ENCODE measurements at regions of chr16 and their contacts with region 1.

Region 1: GRCh38 chr16:25224731-25225319 is 8.1 kb downstream of the AQP8 start:
- DNase-seq: no peak
- ATAC-seq: no peak; the same call in 2 of the 3 replicates
- H3K4me3 ChIP-seq: no peak overlapping the region
- H3K27ac ChIP-seq: no peak overlapping the region
- H3K4me1 ChIP-seq: no peaks in the 10 kb centered on the region
- H3K27me3 ChIP-seq: no peaks in the 10 kb centered on the region
- CTCF ChIP-seq: no peak
- EP300 ChIP-seq: no peak
- POLR2A ChIP-seq: no peak
- RAD21 ChIP-seq: no peak

Region 2: DNA sequence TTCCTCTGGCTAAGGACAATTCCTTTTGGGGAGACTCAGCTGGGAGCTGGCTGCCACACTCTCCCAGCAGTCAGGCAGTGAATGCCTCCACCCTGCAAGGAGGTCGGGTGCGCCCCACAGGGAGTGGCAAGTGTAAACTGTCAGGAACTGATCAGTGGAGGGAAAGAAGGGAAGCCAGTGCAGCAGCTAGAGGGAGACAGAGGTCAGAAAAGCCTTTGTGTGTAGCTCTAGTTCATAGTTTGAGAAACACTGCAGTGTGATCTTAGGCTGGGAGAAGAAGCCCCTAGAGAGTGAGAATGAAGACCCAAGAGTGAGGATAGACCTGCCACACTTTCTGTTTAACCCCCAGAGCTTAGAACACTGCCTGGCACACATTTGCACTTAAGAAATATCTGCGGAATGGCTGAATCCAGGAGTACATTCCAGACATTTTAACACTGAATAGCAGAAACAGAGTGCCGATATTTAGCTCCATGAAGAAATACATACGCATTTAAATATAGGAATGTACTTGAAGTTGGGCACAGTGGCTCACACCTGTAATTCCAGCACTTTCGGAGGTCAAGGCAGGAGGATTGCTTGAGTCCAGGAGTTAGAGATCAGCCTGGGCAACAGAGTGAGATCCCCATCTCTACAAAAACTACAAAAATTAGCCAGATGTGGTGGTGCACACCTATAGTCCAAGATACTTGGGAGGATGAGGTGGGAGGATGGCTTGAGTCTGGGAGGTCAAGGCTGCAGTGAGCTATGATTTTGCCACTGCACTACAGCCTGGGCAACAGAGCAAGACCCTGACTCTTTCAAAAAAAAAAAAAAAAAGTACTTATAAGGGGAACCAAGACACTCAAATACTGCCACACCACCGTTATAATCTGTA is 390.1 kb before region 1 on chr16:
- CTCF ChIA-PET with region 1: interaction called, 16 read pairs
- POLR2A ChIA-PET with region 1: no interaction called
- RAD21 ChIA-PET with region 1: interaction called, 16 read pairs
- SMC1A ChIA-PET with region 1: interaction called, 6 read pairs
- in situ Hi-C with region 1: no loop called
- intact Hi-C with region 1: loop called (anchors 10 kb)
- DNase-seq: no peak
- ATAC-seq: peak; percentile 85
- H3K4me3 ChIP-seq: no peak overlapping the region
- H3K27ac ChIP-seq: no peak overlapping the region
- H3K4me1 ChIP-seq: no peaks in the 10 kb centered on the region
- H3K27me3 ChIP-seq: no peaks in the 10 kb centered on the region
- CTCF ChIP-seq: peak; percentile 56 to 69 (median 62); a peak in 5 of 6 replicates
- EP300 ChIP-seq: no peak
- POLR2A ChIP-seq: no peak
- RAD21 ChIP-seq: peak; percentile 57

Region 3: DNA sequence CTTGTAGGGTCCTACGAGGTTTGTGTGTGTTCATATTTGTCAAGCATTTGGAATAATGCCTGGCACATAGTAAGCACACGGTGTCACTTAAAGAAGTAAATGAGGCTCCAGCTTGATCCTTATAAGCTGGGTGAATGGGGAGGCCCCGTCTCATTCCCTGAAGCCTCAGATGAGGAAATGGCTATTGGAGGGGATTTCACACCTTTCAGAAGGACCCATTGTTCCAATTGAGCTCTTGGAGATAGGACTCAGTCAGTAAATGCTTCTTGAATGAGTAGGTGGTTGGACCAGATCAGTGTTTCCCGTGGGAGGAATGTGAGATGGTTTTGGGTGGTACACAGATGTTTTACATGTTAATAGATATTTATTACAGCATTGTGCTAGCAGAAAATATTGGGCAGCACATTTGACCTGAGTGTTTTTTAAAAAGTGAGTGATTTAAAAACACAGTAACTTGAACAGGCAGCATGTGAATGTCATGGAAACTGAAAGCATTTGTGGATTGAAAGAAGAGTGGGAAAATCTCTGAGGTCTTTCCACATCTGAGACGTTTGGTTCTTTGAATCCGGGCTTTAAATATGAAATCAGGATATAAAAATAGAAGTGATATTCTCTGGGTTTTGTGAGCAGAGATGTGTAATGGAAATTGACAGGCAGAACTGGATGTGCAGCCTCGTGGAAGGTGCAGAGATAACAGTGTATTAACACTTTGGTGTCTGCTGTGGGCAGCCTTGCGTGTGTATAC is 173.2 kb before region 1 on chr16:
- CTCF ChIA-PET with region 1: interaction called, 42 read pairs
- POLR2A ChIA-PET with region 1: no interaction called
- RAD21 ChIA-PET with region 1: interaction called, 10 read pairs
- SMC1A ChIA-PET with region 1: interaction called, 20 read pairs
- in situ Hi-C with region 1: no loop called
- intact Hi-C with region 1: loop called (anchors 1 kb)
- DNase-seq: no peak
- ATAC-seq: peak; percentile 13
- H3K4me3 ChIP-seq: peak overlapping the region; percentile 59; the same call in 1 of the 2 replicates
- H3K27ac ChIP-seq: peak overlapping the region; percentile 2
- H3K4me1 ChIP-seq: peaks cover 33% of the 10 kb centered on the region
- H3K27me3 ChIP-seq: no peaks in the 10 kb centered on the region
- CTCF ChIP-seq: no peak
- EP300 ChIP-seq: no peak; a peak in 1 of 4 replicates
- POLR2A ChIP-seq: no peak
- RAD21 ChIP-seq: 0 out of 2 replicates have a peak, but pooled peaks have one; percentile 1

Region 4: GRCh38 chr16:25066747-25067631 is 157.8 kb before region 1 on chr16:
- CTCF ChIA-PET with region 1: interaction called, 14 read pairs
- POLR2A ChIA-PET with region 1: no interaction called
- RAD21 ChIA-PET with region 1: interaction called, 12 read pairs
- SMC1A ChIA-PET with region 1: interaction called, 9 read pairs
- in situ Hi-C with region 1: loop called (anchors 5 kb)
- intact Hi-C with region 1: no loop called
- DNase-seq: no peak
- ATAC-seq: peak; percentile 98
- H3K4me3 ChIP-seq: peak overlapping the region; percentile 69
- H3K27ac ChIP-seq: peak overlapping the region; percentile 58
- H3K4me1 ChIP-seq: peaks cover 22% of the 10 kb centered on the region
- H3K27me3 ChIP-seq: peaks cover 0 to 2% of the 10 kb centered on the region in 2 experiments; a peak in 1 of 4 replicates
- CTCF ChIP-seq: no peak
- EP300 ChIP-seq: no peak
- POLR2A ChIP-seq: peak; percentile 71
- RAD21 ChIP-seq: no peak

Region 5: GRCh38 chr16:25235991-25236390 is 11.2 kb after region 1 on chr16:
- CTCF ChIA-PET with region 1: interaction called, 16 read pairs
- POLR2A ChIA-PET with region 1: interaction called, 4 read pairs
- RAD21 ChIA-PET with region 1: interaction called, 4 read pairs
- SMC1A ChIA-PET with region 1: interaction called, 9 read pairs
- in situ Hi-C with region 1: no loop called
- intact Hi-C with region 1: no loop called
- DNase-seq: no peak
- ATAC-seq: no peak
- H3K4me3 ChIP-seq: no peak overlapping the region
- H3K27ac ChIP-seq: no peak overlapping the region
- H3K4me1 ChIP-seq: no peaks in the 10 kb centered on the region
- H3K27me3 ChIP-seq: no peaks in the 10 kb centered on the region; a peak in 1 of 4 replicates
- CTCF ChIP-seq: no peak
- EP300 ChIP-seq: no peak
- POLR2A ChIP-seq: no peak
- RAD21 ChIP-seq: no peak